ENCODE measurements at regions of chr2 and their contacts with region 1.

Region 1: DNA sequence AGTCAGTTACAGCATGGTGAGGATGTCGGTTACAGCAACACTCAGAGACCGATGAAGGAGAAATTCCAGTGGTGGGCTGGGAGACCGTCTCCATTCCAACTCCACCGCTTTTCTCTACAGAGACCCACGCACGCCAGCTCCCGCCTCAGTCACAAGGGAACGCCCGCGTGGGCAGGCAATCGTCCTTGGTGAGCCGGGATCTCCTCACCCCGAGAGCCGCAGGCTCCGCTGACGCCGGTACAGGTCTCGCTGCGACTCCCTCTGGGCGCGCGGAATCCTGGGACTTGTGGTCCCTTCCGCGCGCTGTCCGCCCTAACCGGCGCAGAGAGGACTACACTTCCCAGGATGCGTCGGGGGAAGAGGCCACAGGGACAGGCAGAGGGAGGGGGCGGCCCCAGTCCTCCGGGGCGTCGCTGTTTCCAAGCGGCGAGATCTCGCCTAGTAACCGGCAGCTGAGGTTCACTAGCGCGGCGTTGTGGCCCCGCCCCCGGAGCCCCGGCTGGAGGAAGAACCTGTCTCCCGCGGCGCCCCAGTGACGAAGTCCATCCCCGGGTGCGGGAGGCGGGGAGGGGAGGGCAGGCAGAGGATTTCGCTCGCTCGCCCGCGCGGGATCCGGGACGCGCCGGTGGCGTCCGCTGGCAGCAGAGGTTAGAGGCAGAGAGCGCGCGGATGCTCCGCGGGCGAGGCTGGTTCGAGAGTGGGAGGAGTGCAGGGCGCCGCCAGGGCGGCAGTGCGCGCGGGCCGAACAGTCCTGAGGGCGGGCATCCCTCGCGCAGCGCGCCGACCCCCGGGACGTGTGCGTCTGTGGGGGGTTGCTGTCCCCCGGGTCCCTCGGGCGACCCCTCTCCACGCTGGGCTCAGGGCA is at the start of gene EML6:
- DNase-seq: peak in 1 of 2 donors; percentile 98
- H3K4me3 ChIP-seq: peak within 1 kb of the TSS; percentile 64 to 67
- H3K27ac ChIP-seq: peak within 1 kb of the TSS; percentile 62
- H3K4me1 ChIP-seq: peaks cover 8% of the 10 kb centered on the region
- H3K27me3 ChIP-seq: no peaks in the 10 kb centered on the region
- CTCF ChIP-seq: no peak
- POLR2A ChIP-seq: peak in 1 of 2 donors; percentile 34
- total RNA-seq, gene EML6: 1.7 TPM

Region 2: GRCh38 chr2:54741250-54741649 is 17.9 kb after region 1 on chr2:
- intact Hi-C with region 1: no loop called
- DNase-seq: no peak
- H3K4me3 ChIP-seq: no peak overlapping the region
- H3K27ac ChIP-seq: no peak overlapping the region
- H3K4me1 ChIP-seq: no peaks in the 10 kb centered on the region
- H3K27me3 ChIP-seq: no peaks in the 10 kb centered on the region
- CTCF ChIP-seq: no peak
- POLR2A ChIP-seq: no peak

Region 3: GRCh38 chr2:54838585-54839035 is 115.2 kb after region 1 on chr2:
- intact Hi-C with region 1: loop called (anchors 10 kb)
- DNase-seq: no peak
- H3K4me3 ChIP-seq: no peak overlapping the region
- H3K27ac ChIP-seq: no peak overlapping the region
- H3K4me1 ChIP-seq: no peaks in the 10 kb centered on the region
- H3K27me3 ChIP-seq: no peaks in the 10 kb centered on the region
- CTCF ChIP-seq: peak; percentile 57 to 88 (median 71)
- POLR2A ChIP-seq: no peak

Measured in vagina (tissue), 2 donors.